Ovary (tissue), 10 donors: ENCODE measurements at regions of chr14 and their contacts with region 1.

Region 1: GRCh38 chr14:24678801-24679247 is 44.8 kb upstream of the GZMB start:
- DNase-seq: peak; percentile 24 to 50 (median 28)
- H3K4me3 ChIP-seq: peak overlapping the region; percentile 14
- H3K27ac ChIP-seq: no peak overlapping the region
- H3K4me1 ChIP-seq: no peaks in the 10 kb centered on the region
- H3K27me3 ChIP-seq: no peaks in the 10 kb centered on the region
- CTCF ChIP-seq: peak; percentile 12 to 43 (median 21)
- EP300 ChIP-seq: no peak
- POLR2A ChIP-seq: no peak

Region 2: DNA sequence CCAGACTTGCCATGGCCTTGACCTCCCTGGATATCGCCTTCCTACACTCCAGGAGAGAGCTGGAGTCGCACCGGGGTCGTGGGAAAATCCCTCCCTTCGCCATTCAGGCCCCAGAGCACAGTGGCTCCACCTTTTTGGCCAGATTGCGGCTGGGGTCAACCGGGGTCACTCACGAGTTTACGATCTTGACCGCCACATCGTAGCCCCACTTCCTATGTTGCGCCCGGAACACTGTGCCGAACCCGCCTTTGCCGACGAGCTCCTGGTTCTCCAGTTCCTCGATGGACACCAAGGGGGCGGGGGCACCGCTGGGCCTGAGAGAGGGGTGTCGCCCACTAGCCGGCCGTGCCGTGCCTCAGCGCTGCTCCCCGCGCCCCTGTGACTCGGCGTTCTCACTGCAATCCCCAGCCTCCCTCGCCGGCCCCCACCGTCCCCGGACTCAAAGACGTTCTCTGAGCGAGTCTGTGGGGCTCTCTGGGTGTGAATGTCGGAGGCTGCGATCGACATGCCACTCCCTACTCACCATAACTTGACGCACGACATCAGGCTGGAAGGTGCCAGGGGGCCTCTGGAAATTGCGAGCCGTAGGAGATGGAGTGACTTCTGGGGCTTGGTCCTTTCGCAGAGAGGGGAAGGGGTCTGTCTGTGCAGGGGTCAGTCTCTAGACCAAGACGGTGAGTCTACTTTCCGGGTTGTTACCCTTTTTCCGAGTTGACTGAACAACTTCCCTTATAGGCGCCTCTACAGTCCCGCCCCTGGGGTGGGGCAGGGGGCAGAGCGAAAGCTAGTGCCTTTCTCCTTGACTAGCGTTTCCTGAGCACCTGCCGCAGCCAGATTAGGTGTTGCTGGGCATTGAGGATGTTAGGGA is 339.3 kb before region 1 on chr14 and contains the start of gene RIPK3:
- intact Hi-C with region 1: loop called in 1 of 4 experiments (anchors 5 kb)
- DNase-seq: no peak
- H3K4me3 ChIP-seq: peak within 1 kb of the TSS; percentile 28
- H3K27ac ChIP-seq: no peak within 1 kb of the TSS
- H3K4me1 ChIP-seq: no peaks in the 10 kb centered on the region
- H3K27me3 ChIP-seq: no peaks in the 10 kb centered on the region
- CTCF ChIP-seq: no peak
- EP300 ChIP-seq: no peak
- POLR2A ChIP-seq: no peak
- total RNA-seq, gene RIPK3: 0.61 to 3.2 (median 1.1) TPM

Region 3: GRCh38 chr14:24984846-24985589 is 306.2 kb after region 1 on chr14:
- intact Hi-C with region 1: loop called in 1 of 4 experiments (anchors 5 kb)
- DNase-seq: no peak
- H3K4me3 ChIP-seq: no peak overlapping the region
- H3K27ac ChIP-seq: no peak overlapping the region
- H3K4me1 ChIP-seq: no peaks in the 10 kb centered on the region
- H3K27me3 ChIP-seq: no peaks in the 10 kb centered on the region
- CTCF ChIP-seq: no peak
- EP300 ChIP-seq: no peak
- POLR2A ChIP-seq: no peak